Ovary (tissue), 10 donors: ENCODE measurements at regions of chr22 and their contacts with region 1.

Region 1: DNA sequence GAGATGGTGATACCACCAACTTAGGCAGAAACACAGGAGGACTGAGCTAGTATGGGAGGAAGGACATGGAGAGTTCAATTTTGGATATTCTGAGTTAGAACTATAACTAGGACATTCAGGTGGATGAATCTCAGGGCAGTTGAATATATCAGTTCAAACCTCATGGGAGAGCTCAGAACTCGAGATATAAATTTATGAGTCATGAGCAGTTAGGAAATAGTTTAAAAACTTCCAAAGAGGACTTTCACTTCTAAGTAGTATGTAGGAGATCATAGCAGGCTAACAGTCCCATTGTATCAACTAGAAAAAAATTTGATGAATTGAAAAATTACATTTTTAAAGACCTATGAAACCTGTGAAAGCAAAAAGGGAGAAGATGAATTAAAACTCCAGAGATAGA is 436.2 kb upstream of the LARGE1 start:
- DNase-seq: no peak
- H3K4me3 ChIP-seq: no peak overlapping the region
- H3K27ac ChIP-seq: no peak overlapping the region
- H3K4me1 ChIP-seq: no peaks in the 10 kb centered on the region
- H3K27me3 ChIP-seq: no peaks in the 10 kb centered on the region
- CTCF ChIP-seq: no peak
- EP300 ChIP-seq: no peak
- POLR2A ChIP-seq: no peak

Region 2: DNA sequence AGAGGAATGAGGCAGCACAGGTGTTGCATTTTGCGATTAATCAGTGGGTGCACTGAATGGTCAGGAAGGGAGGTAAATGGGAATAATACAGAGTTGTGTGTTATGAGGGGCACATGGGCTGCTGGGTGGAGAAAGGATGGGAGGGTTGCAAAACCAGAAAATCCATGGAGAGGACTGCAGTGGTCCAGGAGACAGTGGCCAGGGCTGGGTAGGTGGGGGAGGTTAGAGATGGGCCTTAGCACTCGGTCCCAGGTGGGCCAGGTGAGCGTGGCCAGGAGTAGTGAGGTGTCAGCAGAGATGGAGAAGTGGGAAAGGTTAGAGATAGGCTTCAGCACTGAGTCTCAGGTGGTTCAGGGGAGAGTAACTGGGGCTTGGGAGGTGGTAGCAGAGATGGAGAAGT is 37.1 kb before region 1 on chr22:
- intact Hi-C with region 1: loop called in 1 of 4 experiments (anchors 1 kb)
- DNase-seq: no peak
- H3K4me3 ChIP-seq: no peak overlapping the region
- H3K27ac ChIP-seq: no peak overlapping the region
- H3K4me1 ChIP-seq: no peaks in the 10 kb centered on the region
- H3K27me3 ChIP-seq: no peaks in the 10 kb centered on the region
- CTCF ChIP-seq: no peak
- EP300 ChIP-seq: no peak
- POLR2A ChIP-seq: no peak